Dendritic cell treated with granulocyte-macrophage colony-stimulating factor and Interleukin-4, amounts not matched to agents 40 ng/mL and 50 ng/mL, for 4 days (primary cell): ENCODE measurements at regions of chr9 and their contacts with region 1.

Region 1: DNA sequence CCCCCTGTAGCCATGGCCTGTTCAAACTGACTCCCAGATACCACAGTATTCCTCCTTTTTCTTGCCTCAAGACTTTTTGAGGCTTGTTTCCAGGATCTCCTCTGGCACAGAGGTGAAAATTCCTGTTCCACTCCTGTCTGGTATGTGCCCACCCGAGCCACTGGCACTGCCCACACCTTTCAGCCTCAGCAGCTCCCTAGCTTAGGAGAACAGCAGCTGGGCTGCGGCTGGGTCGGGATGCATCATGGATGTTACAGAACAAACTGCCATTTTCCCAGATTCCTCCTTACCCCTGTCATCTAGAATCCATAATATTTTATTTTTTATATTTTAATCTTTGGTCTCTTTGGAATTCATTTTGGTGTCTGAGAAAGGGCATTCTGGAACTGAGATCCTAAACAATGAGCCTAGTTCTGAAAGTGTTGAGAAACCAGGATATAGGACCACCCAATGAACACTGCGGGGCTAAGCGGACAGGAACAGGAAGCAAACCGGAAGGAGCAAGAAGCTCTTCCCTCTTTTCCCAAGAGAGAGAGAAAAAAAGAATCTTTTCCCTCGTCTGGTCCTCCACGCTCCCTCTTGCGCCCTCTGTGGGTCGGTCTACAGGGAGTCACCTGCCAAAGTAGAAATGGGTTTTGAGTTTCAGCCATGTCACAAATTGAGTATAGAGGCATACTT is 12.5 kb downstream of the OR2S2 start:
- H3K4me3 Mint-ChIP-seq: no peak overlapping the region
- H3K27ac Mint-ChIP-seq: no peak overlapping the region
- H3K4me1 Mint-ChIP-seq: peaks cover 5% of the 10 kb centered on the region
- H3K27me3 Mint-ChIP-seq: peaks cover 9% of the 10 kb centered on the region

Region 2: DNA sequence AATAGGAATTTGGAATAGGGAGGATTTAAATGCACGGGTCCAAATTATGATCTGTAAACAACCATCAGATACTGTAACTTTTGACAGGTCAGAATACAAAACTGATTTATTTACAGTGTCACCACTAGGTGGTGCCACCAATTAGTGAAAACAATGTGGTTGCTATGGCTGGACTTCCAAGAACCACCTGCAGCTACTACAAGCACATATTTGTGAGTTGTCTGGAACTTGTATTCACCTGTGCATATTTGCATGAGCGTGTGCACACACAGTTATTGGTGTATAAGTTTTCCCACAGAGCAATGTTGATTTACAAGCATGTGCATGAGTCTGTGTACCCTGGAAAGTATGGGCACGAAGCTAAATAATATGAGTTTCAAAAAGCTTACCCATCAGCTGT is 42.4 kb before region 1 on chr9:
- intact Hi-C with region 1: loop called (anchors 1 kb)
- H3K4me3 Mint-ChIP-seq: no peak overlapping the region
- H3K27ac Mint-ChIP-seq: no peak overlapping the region
- H3K4me1 Mint-ChIP-seq: peaks cover 29% of the 10 kb centered on the region
- H3K27me3 Mint-ChIP-seq: peaks cover 48% of the 10 kb centered on the region